ENCODE measurements at regions of chr5 and their contacts with region 1.

Region 1: DNA sequence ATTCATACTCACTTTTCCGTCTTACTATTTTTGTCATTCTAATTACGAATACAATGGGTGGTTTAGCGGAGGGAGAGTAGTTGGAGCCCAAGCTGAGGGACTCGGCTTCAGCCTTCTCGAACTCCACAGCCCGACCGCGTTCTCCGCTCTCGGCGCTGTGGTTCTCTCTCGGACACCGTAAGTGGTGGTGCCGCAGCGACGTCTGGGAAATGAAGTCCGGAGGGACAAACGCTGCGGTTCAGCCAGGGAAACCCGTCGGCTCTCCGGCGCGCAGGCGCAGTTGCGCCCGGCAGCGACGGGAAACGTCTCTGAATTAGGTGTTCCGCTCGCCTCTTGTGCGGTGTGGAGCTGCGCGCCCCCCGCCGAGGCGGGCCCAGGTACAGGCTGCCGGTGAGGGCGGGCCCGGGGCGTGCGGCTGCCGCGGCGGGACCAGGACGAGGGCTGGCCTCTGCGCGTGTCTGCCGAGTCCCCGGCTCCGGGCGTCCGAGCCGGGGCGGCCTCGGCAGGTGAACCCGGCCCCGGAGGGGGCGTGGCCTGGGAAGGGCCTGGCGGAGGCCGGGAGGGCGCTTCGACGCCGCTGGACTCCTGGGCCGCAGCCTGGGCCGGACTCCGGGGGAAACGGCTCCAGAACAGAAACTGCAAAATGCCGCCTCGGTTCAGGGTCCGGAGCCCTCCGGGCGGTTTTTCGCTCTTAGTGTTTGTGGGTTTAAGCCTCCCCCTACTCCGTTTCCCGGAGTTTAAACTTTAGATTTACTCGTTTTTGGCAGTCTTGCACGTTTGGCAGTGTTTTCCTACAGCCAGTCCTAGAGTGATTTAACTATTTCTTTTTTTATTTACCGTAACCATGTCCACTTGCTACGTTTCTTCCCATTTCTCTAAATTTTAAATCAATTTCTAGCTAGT is at the start of gene ZNF879:
- DNase-seq: peak; percentile 97
- H3K4me3 Mint-ChIP-seq: peak within 1 kb of the TSS; percentile 89
- H3K27ac Mint-ChIP-seq: peak within 1 kb of the TSS; percentile 79
- H3K4me1 Mint-ChIP-seq: peaks cover 5% of the 10 kb centered on the region
- H3K27me3 Mint-ChIP-seq: no peaks in the 10 kb centered on the region
- total RNA-seq, gene ZNF879: 2.7 and 3.8 TPM in 2 replicates

Region 2: DNA sequence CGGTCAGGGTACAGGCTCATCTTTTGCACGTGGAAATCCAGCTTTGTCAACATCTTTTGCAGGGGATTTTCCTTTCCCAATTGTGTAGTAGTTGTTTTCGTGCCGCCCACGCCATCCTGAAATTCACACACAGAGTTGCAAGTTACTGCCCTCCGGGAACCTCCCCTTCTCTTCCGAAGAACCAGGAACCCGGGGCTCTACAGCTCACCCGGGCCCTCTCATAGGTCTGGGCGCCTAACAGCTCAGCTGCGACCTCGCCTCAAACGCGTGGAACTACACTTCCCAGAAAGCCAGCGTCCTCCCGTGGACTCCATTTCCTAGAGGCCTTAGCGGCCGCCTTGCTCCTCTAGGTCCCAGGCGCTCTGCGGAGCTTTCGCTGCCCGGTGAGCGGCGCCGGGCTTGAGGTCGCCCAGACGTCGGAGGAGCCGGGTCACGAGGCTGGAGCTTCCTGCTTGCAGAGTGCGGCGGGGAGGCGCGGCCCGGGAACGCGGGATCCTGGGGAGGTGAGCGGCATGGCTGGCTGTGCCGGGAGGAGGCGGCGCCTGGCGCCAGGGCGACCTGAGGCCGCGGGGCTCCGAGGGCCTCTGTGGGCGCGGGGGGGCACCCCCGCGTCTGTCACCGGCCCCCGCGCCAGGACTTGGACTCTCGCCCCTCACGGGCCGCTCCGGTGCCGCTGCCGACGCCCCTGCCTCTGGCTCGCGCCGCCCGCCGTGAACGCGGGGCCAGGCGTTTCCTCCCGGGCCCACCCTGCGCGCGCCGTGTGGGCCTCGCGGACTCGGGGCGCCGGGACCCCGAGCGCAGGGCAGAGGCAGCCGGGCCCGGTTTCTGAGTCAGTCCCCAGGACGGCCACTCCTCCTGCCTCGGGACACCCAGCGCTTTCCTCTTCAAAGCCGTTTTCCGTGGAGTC is 163.9 kb before region 1 on chr5 and contains the start of gene ZNF354B:
- intact Hi-C with region 1: loop called (anchors 1 kb)
- DNase-seq: peak; percentile 95
- H3K4me3 Mint-ChIP-seq: peak within 1 kb of the TSS; percentile 89
- H3K27ac Mint-ChIP-seq: peak within 1 kb of the TSS; percentile 83
- H3K4me1 Mint-ChIP-seq: peaks cover 16% of the 10 kb centered on the region
- H3K27me3 Mint-ChIP-seq: no peaks in the 10 kb centered on the region
- total RNA-seq, gene ZNF354B: 13.5 and 17.0 TPM in 2 replicates

Region 3: GRCh38 chr5:179060116-179061008 is 36.6 kb after region 1 on chr5 and contains the start of gene ZNF354C:
- intact Hi-C with region 1: loop called (anchors 1 kb)
- DNase-seq: peak; percentile 94
- H3K4me3 Mint-ChIP-seq: peak within 1 kb of the TSS; percentile 91
- H3K27ac Mint-ChIP-seq: peak within 1 kb of the TSS; percentile 87
- H3K4me1 Mint-ChIP-seq: peaks cover 12% of the 10 kb centered on the region
- H3K27me3 Mint-ChIP-seq: no peaks in the 10 kb centered on the region
- total RNA-seq, gene ZNF354C: 4.0 and 4.5 TPM in 2 replicates

Measured in activated CD4-positive, alpha-beta T cell treated with anti-CD3 and anti-CD28 coated beads, Interleukin-2, amount 10 ng/mL, durations not matched to agents 24 days and 14 days (primary cell).